Activated CD8-positive, alpha-beta T cell treated with anti-CD3 and anti-CD28 coated beads, Interleukin-2, amount 10 ng/mL, durations not matched to agents 7 days and 5 days (primary cell): ENCODE measurements at regions of chr9 and their contacts with region 1.

Region 1: GRCh38 chr9:6827439-6827838 is 69.7 kb downstream of the KDM4C start:
- DNase-seq: peak; percentile 54
- ATAC-seq: peak; percentile 36
- H3K4me3 Mint-ChIP-seq: no peak overlapping the region
- H3K27ac Mint-ChIP-seq: no peak overlapping the region
- H3K4me1 Mint-ChIP-seq: peaks cover 10% of the 10 kb centered on the region
- H3K27me3 Mint-ChIP-seq: no peaks in the 10 kb centered on the region

Region 2: GRCh38 chr9:6845880-6846279 is 18.4 kb after region 1 on chr9:
- CTCF ChIA-PET with region 1: interaction called, 12 read pairs
- POLR2A ChIA-PET with region 1: no interaction called
- DNase-seq: no peak
- ATAC-seq: no peak
- H3K4me3 Mint-ChIP-seq: no peak overlapping the region
- H3K27ac Mint-ChIP-seq: no peak overlapping the region
- H3K4me1 Mint-ChIP-seq: no peaks in the 10 kb centered on the region
- H3K27me3 Mint-ChIP-seq: no peaks in the 10 kb centered on the region

Region 3: DNA sequence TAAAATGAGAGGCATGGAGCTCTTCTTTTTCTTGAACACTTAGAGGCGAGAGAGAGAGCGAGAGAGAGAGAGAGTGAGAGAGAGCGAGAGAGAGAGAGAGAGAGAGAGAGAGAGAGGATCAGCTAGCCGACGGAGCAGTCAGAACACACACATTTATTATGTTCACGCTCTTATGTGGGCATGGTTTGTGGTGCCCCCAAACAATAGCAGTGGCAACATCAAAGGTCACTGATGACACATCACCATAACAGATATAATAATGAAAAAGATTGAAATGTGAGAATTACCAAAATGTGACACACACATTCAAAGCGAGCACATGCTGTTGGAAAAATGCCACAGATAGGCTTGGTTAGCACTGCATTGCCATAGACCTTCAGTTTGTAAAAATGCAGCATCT is 46.4 kb after region 1 on chr9:
- CTCF ChIA-PET with region 1: interaction called, 13 read pairs
- POLR2A ChIA-PET with region 1: no interaction called
- DNase-seq: no peak
- ATAC-seq: peak; percentile 41
- H3K4me3 Mint-ChIP-seq: no peak overlapping the region
- H3K27ac Mint-ChIP-seq: no peak overlapping the region
- H3K4me1 Mint-ChIP-seq: peaks cover 30% of the 10 kb centered on the region
- H3K27me3 Mint-ChIP-seq: no peaks in the 10 kb centered on the region

Region 4: DNA sequence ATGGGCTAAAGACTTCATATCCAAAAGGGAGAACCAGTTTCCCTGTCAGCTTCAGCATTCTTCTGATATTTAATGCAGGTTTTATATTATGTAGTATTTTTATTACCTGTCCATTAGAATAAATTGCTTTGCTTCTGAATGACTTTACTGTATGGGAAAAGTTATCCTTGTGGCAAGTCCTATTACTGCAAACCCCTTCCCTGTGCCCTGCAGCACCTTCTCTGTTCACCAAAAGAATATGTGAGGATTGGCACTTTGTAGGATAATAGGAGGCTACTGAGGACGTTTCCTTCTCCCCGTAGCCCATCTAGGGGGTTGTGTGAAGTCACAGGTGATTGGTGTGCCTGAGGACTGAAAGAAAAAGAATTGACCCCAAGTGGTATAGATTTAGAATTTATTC is 226.5 kb after region 1 on chr9:
- CTCF ChIA-PET with region 1: interaction called, 19 read pairs
- POLR2A ChIA-PET with region 1: no interaction called
- DNase-seq: no peak
- ATAC-seq: no peak
- H3K4me3 Mint-ChIP-seq: no peak overlapping the region
- H3K27ac Mint-ChIP-seq: no peak overlapping the region
- H3K4me1 Mint-ChIP-seq: peaks cover 2% of the 10 kb centered on the region
- H3K27me3 Mint-ChIP-seq: no peaks in the 10 kb centered on the region

Region 5: GRCh38 chr9:7536310-7536939 is 709.0 kb after region 1 on chr9:
- CTCF ChIA-PET with region 1: interaction called, 10 read pairs
- POLR2A ChIA-PET with region 1: no interaction called
- DNase-seq: peak; percentile 67
- ATAC-seq: peak; percentile 80
- H3K4me3 Mint-ChIP-seq: no peak overlapping the region
- H3K27ac Mint-ChIP-seq: no peak overlapping the region
- H3K4me1 Mint-ChIP-seq: peaks cover 27% of the 10 kb centered on the region
- H3K27me3 Mint-ChIP-seq: peaks cover 4% of the 10 kb centered on the region